ENCODE measurements at regions of chr6 and their contacts with region 1.

Region 1: DNA sequence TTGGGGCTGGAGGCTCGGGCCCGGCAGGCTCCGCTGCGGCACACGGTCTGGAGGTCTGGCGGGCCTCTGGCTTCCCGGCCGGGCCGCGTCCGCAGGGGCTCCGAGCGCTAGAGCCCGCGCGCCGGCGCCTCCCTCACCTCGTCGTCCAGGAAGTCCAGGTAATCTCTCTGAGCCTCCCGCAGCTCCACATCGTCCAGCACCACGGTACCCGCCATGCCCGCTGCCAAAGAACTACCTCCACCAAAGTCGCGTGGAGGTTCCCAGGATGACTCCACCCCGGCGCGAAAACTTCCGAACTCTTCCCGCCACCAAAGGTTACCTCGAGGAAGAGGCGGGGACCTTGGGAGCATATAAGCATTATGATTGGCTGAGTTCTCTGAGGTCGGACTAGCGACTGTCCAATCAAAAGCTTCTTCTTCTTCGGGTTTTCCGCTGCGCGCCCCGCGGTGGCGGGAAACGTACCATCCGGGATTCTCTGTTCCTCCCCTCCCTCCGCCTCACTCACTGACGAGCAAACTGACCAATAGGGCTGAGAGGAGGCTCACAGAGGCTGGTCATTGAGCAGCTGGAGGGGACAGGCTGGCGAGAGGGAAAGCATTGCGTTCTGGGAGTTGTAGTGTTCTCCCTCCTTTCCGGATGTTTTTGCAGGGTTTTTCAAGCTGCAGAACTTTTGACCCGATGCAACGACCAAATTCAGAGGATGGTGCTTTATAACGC is at the start of gene MCM3:
- H3K4me3 ChIP-seq: peak within 1 kb of the TSS; percentile 76
- H3K27ac ChIP-seq: peak within 1 kb of the TSS; percentile 96
- H3K4me1 ChIP-seq: peaks cover 6% of the 10 kb centered on the region; the same call in 1 of the 2 replicates
- CTCF ChIP-seq: no peak

Region 2: GRCh38 chr6:52263709-52264540 is 20.7 kb before region 1 on chr6:
- CTCF ChIA-PET with region 1: interaction called, 29 read pairs
- POLR2A ChIA-PET with region 1: interaction called, 6 read pairs
- H3K4me3 ChIP-seq: no peak overlapping the region
- H3K27ac ChIP-seq: peak overlapping the region; percentile 29; the same call in 1 of the 2 replicates
- H3K4me1 ChIP-seq: no peaks in the 10 kb centered on the region
- CTCF ChIP-seq: peak; percentile 83

Region 3: GRCh38 chr6:52303178-52303577 is 18.6 kb after region 1 on chr6:
- CTCF ChIA-PET with region 1: interaction called, 14 read pairs
- POLR2A ChIA-PET with region 1: interaction called, 3 read pairs
- H3K4me3 ChIP-seq: no peak overlapping the region
- H3K27ac ChIP-seq: no peak overlapping the region
- H3K4me1 ChIP-seq: no peaks in the 10 kb centered on the region
- CTCF ChIP-seq: no peak

Region 4: DNA sequence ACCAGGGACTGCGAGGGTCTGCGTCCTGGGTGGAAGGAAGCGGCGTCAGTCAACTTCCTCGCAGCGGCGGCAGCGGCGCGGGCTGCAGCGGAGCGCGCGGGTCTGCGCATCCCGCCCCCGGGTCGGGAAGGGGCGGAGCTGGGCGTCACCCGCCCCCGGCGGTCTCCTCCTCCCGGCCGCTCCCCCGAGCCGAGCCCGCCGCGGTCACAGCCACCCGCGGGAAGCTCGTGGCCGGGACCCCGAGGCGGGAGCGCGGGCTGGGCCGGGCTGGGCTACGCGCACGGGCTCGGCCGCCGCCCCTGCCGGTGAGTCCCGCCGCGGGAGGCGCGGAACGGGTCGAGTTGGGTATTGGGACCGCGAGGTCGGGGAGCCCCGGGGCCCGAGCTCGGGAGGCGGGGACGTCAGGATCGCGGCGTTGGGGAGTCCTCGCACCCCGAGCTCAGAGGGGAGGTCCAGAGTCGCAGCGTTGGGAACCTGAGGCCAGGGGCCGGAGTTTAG is 77.4 kb after region 1 on chr6 and contains the start of gene PAQR8:
- CTCF ChIA-PET with region 1: interaction called, 11 read pairs
- POLR2A ChIA-PET with region 1: interaction called, 28 read pairs
- H3K4me3 ChIP-seq: peak within 1 kb of the TSS; percentile 81
- H3K27ac ChIP-seq: peak within 1 kb of the TSS; percentile 82
- H3K4me1 ChIP-seq: peaks cover 4% of the 10 kb centered on the region
- CTCF ChIP-seq: no peak

Region 5: DNA sequence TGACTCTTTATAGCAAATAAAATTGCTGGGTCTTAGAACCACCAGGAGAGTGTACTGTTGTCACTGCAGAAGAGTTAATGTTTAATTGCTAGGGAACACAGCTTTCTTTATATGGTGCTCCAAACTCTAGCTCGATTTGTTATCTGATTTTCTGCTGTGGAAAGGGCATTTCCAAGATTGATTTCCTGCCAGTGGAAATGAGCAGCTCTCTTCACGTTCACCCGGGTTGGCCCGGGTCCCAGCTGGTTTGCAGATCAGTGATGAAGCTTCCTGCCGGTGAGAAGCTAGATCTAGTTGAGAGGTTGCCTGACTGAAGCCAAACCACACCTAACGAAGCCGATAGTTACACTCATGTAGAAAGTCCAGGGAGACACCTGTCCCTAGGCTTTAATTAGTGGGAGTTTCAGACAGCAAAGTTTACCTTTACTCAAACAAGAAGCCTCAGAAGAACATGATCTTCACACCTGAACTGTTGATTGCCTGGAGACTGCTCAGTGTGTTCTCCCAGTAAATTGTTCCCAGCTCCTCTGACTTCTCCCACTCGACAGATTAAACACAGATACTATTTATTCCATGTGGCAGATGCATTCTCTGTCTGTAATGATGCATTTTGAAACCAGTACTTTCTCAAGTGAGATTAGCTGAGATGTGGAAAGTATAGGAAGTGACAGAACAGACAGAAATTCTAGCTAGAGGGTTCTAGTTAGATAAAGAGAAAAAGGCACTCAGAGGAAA is 105.2 kb after region 1 on chr6:
- CTCF ChIA-PET with region 1: interaction called, 202 read pairs
- POLR2A ChIA-PET with region 1: interaction called, 11 read pairs
- H3K4me3 ChIP-seq: no peak overlapping the region
- H3K27ac ChIP-seq: no peak overlapping the region
- H3K4me1 ChIP-seq: peaks cover 5% of the 10 kb centered on the region
- CTCF ChIP-seq: no peak; the same call in 1 of the 2 replicates

Region 6: DNA sequence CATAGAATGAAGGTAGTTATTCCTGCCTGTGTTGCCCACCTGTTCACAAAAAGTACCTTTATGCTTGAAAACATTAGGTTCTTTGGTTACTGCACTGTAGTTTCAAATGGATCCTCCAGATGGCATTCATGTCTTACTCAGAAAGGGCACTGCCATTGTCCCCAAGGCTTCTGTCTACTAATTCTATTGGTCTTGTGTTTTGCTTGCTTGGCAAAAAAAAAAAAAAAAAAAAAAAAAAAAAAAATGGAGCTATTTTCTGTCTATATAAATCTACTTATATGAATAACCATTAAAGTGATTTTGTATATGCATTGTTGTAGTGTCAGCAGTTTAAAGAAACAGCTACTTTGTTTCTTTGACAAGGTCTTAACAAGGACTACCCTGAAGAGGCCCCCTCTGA is 122.8 kb after region 1 on chr6:
- CTCF ChIA-PET with region 1: interaction called, 202 read pairs
- POLR2A ChIA-PET with region 1: interaction called, 5 read pairs
- H3K4me3 ChIP-seq: no peak overlapping the region
- H3K27ac ChIP-seq: no peak overlapping the region
- H3K4me1 ChIP-seq: no peaks in the 10 kb centered on the region
- CTCF ChIP-seq: peak; percentile 64

Region 7: DNA sequence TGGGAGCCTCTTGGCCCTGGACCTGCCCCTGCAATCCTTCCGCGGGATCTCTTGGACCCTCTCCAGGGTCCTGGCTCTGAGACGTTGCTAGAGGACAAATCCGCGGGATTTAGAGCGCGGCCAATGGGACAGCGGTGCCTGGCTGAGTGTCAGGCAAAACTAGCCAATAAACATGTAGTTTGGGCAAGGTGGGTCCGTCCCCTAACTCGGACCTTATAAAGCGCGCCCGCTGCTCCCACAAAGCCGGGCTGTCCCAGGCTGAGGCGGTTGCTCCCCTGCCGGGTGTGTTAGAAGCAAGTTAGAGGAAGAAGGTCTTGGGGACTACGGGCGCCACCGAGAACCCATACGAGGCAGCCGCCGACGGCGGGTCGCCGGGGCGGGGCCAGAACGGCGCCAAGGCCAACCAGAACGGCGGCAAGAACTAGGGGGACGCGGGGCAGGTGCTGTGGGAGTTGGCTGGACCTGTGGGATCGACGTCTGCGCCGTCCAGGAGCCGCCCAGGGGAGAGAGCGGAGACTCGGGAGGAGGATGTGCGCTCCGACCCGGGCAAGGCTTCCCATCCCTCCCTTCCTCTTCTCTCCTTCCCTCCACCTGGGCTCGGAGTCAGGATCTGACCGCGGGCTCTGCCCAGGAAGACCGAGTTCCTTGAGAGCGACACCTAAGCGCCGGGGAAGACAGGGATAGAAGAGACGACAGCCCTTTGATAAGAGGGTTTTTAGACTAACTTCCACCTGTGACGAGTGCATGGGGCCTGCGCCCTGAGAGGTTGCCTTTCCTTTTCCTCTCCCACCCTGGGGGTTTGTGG is 379.8 kb after region 1 on chr6:
- CTCF ChIA-PET with region 1: interaction called, 10 read pairs
- POLR2A ChIA-PET with region 1: interaction called, 3 read pairs
- H3K4me3 ChIP-seq: peak overlapping the region; percentile 52
- H3K27ac ChIP-seq: peak overlapping the region; percentile 76
- H3K4me1 ChIP-seq: peaks cover 10% of the 10 kb centered on the region; the same call in 1 of the 2 replicates
- CTCF ChIP-seq: 0 out of 2 replicates have a peak, but pooled peaks have one; percentile 39